Activated CD4-positive, alpha-beta T cell treated with anti-CD3 and anti-CD28 coated beads for 36 hours (primary cell): ENCODE measurements at regions of chr3 and their contacts with region 1.

Region 1: DNA sequence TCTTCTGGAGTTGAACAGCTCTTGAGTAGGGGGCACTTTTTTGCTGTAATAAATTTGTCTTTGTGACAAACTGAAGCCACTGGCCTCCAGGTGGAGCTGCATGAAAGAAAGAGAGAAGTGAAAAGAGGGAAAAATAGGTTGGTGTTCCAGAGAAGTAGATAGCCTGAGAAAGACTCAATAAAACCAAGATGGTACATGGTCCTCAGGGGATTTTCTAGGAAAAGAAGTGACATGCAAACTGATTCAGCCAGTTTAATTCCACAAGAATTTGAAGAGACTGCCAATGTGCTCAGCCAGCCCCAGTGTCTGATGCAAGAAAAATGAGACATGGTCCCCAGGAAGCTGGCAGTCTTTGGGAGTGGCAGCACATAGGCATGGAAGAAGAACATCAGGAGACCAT is 152.7 kb downstream of the CD47 start:
- DNase-seq: peak; percentile 17
- ATAC-seq: no peak
- H3K4me3 Mint-ChIP-seq: no peak overlapping the region
- H3K27ac Mint-ChIP-seq: no peak overlapping the region
- H3K4me1 Mint-ChIP-seq: peaks cover 22% of the 10 kb centered on the region
- H3K27me3 Mint-ChIP-seq: peaks cover 5% of the 10 kb centered on the region

Region 2: GRCh38 chr3:107966271-107966670 is 28.1 kb after region 1 on chr3:
- CTCF ChIA-PET with region 1: no interaction called
- POLR2A ChIA-PET with region 1: no interaction called
- intact Hi-C with region 1: no loop called
- DNase-seq: no peak
- ATAC-seq: no peak
- H3K4me3 Mint-ChIP-seq: no peak overlapping the region
- H3K27ac Mint-ChIP-seq: no peak overlapping the region
- H3K4me1 Mint-ChIP-seq: peaks cover 16% of the 10 kb centered on the region
- H3K27me3 Mint-ChIP-seq: no peaks in the 10 kb centered on the region

Region 3: GRCh38 chr3:107978131-107979055 is 40.2 kb after region 1 on chr3:
- CTCF ChIA-PET with region 1: no interaction called
- POLR2A ChIA-PET with region 1: no interaction called
- intact Hi-C with region 1: no loop called
- DNase-seq: no peak
- ATAC-seq: no peak
- H3K4me3 Mint-ChIP-seq: no peak overlapping the region
- H3K27ac Mint-ChIP-seq: peak overlapping the region; percentile 9
- H3K4me1 Mint-ChIP-seq: peaks cover 51% of the 10 kb centered on the region
- H3K27me3 Mint-ChIP-seq: no peaks in the 10 kb centered on the region

Region 4: GRCh38 chr3:108073764-108074431 is 135.8 kb after region 1 on chr3:
- CTCF ChIA-PET with region 1: no interaction called
- POLR2A ChIA-PET with region 1: no interaction called
- intact Hi-C with region 1: loop called in 1 of 2 experiments (anchors 1 kb)
- DNase-seq: no peak
- ATAC-seq: peak; percentile 54
- H3K4me3 Mint-ChIP-seq: no peak overlapping the region
- H3K27ac Mint-ChIP-seq: peak overlapping the region; percentile 66
- H3K4me1 Mint-ChIP-seq: peaks cover 77% of the 10 kb centered on the region
- H3K27me3 Mint-ChIP-seq: no peaks in the 10 kb centered on the region

Region 5: GRCh38 chr3:108124337-108125152 is 186.4 kb after region 1 on chr3:
- CTCF ChIA-PET with region 1: no interaction called
- POLR2A ChIA-PET with region 1: no interaction called
- intact Hi-C with region 1: loop called in 1 of 2 experiments (anchors 5 kb)
- DNase-seq: peak; percentile 82
- ATAC-seq: peak; percentile 70
- H3K4me3 Mint-ChIP-seq: peak overlapping the region; percentile 93
- H3K27ac Mint-ChIP-seq: peak overlapping the region; percentile 96
- H3K4me1 Mint-ChIP-seq: peaks cover 62% of the 10 kb centered on the region
- H3K27me3 Mint-ChIP-seq: no peaks in the 10 kb centered on the region

Region 6: DNA sequence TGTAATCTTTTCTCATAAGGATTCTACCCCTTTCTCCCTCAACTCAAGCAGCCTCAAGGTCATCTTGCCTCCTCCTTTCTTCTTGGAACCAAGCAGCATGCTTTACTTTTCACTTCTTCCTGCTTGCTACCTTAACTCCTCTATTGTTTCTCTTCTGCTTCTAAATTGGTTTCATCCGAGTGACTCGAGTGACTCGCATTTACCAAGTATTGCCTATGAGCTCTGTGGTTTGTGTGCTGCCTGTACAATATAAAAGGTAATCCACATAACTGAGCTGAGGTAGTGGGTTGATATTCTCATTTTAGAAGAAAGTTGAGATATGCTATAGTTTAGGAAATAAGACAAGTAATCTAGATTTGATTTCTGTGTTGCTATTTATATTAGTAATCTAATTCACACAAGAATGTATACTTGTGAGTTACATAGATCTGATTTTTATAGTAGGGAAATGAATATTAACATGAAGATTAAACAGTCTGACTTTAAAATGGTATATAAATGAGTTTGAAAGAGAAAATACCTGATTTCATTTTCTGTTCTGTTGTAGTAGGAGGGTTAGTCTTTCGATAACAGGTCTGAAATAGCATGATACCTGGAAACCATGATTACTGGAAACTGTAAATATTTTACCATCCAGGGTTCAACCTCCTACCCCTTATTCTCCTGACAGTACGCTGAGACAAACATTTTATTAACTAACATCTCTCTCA is 363.7 kb after region 1 on chr3:
- CTCF ChIA-PET with region 1: no interaction called
- POLR2A ChIA-PET with region 1: no interaction called
- intact Hi-C with region 1: loop called in 1 of 2 experiments (anchors 5 kb)
- DNase-seq: peak; percentile 33
- ATAC-seq: peak; percentile 86
- H3K4me3 Mint-ChIP-seq: peak overlapping the region; percentile 45
- H3K27ac Mint-ChIP-seq: peak overlapping the region; percentile 83
- H3K4me1 Mint-ChIP-seq: peaks cover 43% of the 10 kb centered on the region
- H3K27me3 Mint-ChIP-seq: peaks cover 2% of the 10 kb centered on the region

Region 7: GRCh38 chr3:108388136-108389132 is 450.3 kb after region 1 on chr3:
- CTCF ChIA-PET with region 1: interaction called, 3 read pairs
- POLR2A ChIA-PET with region 1: no interaction called
- intact Hi-C with region 1: loop called in 1 of 2 experiments (anchors 1 kb)
- DNase-seq: peak; percentile 29
- ATAC-seq: peak; percentile 90
- H3K4me3 Mint-ChIP-seq: no peak overlapping the region
- H3K27ac Mint-ChIP-seq: peak overlapping the region; percentile 8
- H3K4me1 Mint-ChIP-seq: peaks cover 25% of the 10 kb centered on the region
- H3K27me3 Mint-ChIP-seq: peaks cover 15% of the 10 kb centered on the region

Region 8: GRCh38 chr3:108406661-108407206 is 468.6 kb after region 1 on chr3:
- CTCF ChIA-PET with region 1: interaction called, 6 read pairs
- POLR2A ChIA-PET with region 1: no interaction called
- intact Hi-C with region 1: loop called in 1 of 2 experiments (anchors 2 kb)
- DNase-seq: peak; percentile 35
- ATAC-seq: peak; percentile 96
- H3K4me3 Mint-ChIP-seq: no peak overlapping the region
- H3K27ac Mint-ChIP-seq: no peak overlapping the region
- H3K4me1 Mint-ChIP-seq: peaks cover 10% of the 10 kb centered on the region
- H3K27me3 Mint-ChIP-seq: no peaks in the 10 kb centered on the region

Region 9: GRCh38 chr3:108477511-108478147 is 539.5 kb after region 1 on chr3:
- CTCF ChIA-PET with region 1: interaction called, 4 read pairs
- POLR2A ChIA-PET with region 1: no interaction called
- intact Hi-C with region 1: loop called in 1 of 2 experiments (anchors 5 kb)
- DNase-seq: peak; percentile 78
- ATAC-seq: peak; percentile 79
- H3K4me3 Mint-ChIP-seq: no peak overlapping the region
- H3K27ac Mint-ChIP-seq: no peak overlapping the region
- H3K4me1 Mint-ChIP-seq: no peaks in the 10 kb centered on the region
- H3K27me3 Mint-ChIP-seq: peaks cover 2% of the 10 kb centered on the region